Activated CD4-positive, alpha-beta T cell treated with anti-CD3 and anti-CD28 coated beads for 36 hours (primary cell): ENCODE measurements at regions of chr14 and their contacts with region 1.

Region 1: GRCh38 chr14:91060351-91061055 is at the start of gene RPS6KA5:
- DNase-seq: peak; percentile 100
- ATAC-seq: peak; percentile 87
- H3K4me3 Mint-ChIP-seq: no peak within 1 kb of the TSS
- H3K27ac Mint-ChIP-seq: peak within 1 kb of the TSS; percentile 71
- H3K4me1 Mint-ChIP-seq: peaks cover 58% of the 10 kb centered on the region
- H3K27me3 Mint-ChIP-seq: no peaks in the 10 kb centered on the region
- total RNA-seq, gene RPS6KA5: 11.9 to 13.8 TPM

Region 2: DNA sequence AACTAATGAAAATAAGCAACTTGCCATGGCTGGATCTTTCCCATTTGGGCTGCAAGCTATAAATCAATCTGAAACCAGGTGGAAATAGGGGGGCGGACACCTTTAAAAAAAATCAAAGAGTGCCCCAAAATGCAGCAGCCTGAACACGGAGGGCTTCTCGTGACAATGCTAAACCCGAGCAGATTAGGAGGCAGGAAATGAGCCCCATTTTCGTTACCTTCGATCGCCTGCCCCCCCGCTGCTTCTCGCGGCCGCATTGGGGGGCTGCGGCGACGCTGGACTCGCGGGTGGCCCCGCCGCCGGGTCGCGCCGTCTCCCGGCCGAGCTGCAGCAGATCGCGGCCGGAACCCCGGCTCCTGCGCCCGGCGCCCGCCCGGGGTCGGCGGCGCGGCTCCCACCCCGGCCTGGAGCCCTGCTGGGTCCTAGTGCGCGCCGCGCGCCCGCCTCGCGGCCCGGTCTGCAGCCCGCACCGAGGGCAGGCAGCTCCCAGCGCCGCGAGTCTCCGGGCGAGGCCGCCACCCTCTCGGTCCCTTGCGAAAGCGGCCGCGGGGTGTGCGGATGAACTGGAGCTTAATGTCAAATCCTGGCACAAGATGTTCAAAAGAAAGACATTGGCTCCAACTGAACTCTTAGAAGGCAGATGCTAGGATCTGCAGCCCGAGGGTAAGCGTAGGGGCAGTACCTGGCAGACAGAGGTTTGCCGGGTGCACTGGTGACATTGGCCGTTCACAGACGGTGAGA is 1441.5 kb before region 1 on chr14:
- CTCF ChIA-PET with region 1: no interaction called
- POLR2A ChIA-PET with region 1: no interaction called
- intact Hi-C with region 1: loop called in 1 of 2 experiments (anchors 10 kb)
- DNase-seq: peak; percentile 82
- ATAC-seq: peak; percentile 38
- H3K4me3 Mint-ChIP-seq: peak overlapping the region; percentile 95
- H3K27ac Mint-ChIP-seq: peak overlapping the region; percentile 94
- H3K4me1 Mint-ChIP-seq: peaks cover 70% of the 10 kb centered on the region
- H3K27me3 Mint-ChIP-seq: no peaks in the 10 kb centered on the region

Region 3: GRCh38 chr14:90399541-90400444 is 660.7 kb before region 1 on chr14:
- CTCF ChIA-PET with region 1: no interaction called
- POLR2A ChIA-PET with region 1: no interaction called
- intact Hi-C with region 1: loop called in 1 of 2 experiments (anchors 5 kb)
- DNase-seq: peak; percentile 93
- ATAC-seq: peak; percentile 62
- H3K4me3 Mint-ChIP-seq: peak overlapping the region; percentile 97
- H3K27ac Mint-ChIP-seq: peak overlapping the region; percentile 95
- H3K4me1 Mint-ChIP-seq: peaks cover 53% of the 10 kb centered on the region
- H3K27me3 Mint-ChIP-seq: no peaks in the 10 kb centered on the region

Region 4: DNA sequence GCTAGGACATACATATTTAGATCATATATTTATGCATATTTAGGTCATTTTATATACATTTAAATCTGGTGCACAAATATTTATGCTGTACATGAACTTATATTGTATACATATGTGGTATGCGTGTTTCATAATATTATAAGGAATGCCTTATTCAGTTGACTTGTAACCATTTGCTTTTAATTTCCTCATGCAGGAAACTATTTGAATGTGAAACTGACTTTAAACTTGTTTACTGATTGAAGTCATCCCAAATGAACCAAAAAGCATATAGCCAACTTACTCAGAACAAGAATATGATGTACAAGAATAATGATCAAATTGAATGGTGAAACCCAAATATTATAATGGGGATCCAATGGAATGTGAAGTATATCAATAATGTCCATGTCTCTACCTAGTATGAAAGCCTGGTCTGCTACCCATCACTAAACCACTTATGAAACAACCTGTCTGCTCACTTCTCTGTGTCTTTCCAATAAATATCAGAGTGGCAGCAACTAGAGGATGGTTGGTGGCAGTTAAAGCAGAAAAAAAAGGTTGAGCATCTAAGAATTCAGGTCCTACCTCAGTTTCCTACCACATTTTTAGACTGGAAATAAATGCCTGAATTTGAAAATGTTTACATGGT is 38.4 kb before region 1 on chr14:
- CTCF ChIA-PET with region 1: interaction called, 3 read pairs
- POLR2A ChIA-PET with region 1: interaction called, 4 read pairs
- intact Hi-C with region 1: loop called (anchors 2 to 5 kb)
- DNase-seq: no peak
- ATAC-seq: peak; percentile 52
- H3K4me3 Mint-ChIP-seq: peak overlapping the region; percentile 53
- H3K27ac Mint-ChIP-seq: peak overlapping the region; percentile 81
- H3K4me1 Mint-ChIP-seq: peaks cover 36% of the 10 kb centered on the region
- H3K27me3 Mint-ChIP-seq: no peaks in the 10 kb centered on the region

Region 5: GRCh38 chr14:91138511-91139359 is 78.2 kb after region 1 on chr14:
- CTCF ChIA-PET with region 1: no interaction called
- POLR2A ChIA-PET with region 1: no interaction called
- intact Hi-C with region 1: loop called in 1 of 2 experiments (anchors 1 kb)
- DNase-seq: peak; percentile 72
- ATAC-seq: peak; percentile 84
- H3K4me3 Mint-ChIP-seq: no peak overlapping the region
- H3K27ac Mint-ChIP-seq: peak overlapping the region; percentile 29
- H3K4me1 Mint-ChIP-seq: peaks cover 41% of the 10 kb centered on the region
- H3K27me3 Mint-ChIP-seq: no peaks in the 10 kb centered on the region

Region 6: GRCh38 chr14:91303091-91303923 is 242.8 kb after region 1 on chr14:
- CTCF ChIA-PET with region 1: no interaction called
- POLR2A ChIA-PET with region 1: no interaction called
- intact Hi-C with region 1: loop called (anchors 5 kb)
- DNase-seq: peak; percentile 97
- ATAC-seq: peak; percentile 87
- H3K4me3 Mint-ChIP-seq: peak overlapping the region; percentile 66
- H3K27ac Mint-ChIP-seq: peak overlapping the region; percentile 97
- H3K4me1 Mint-ChIP-seq: peaks cover 63% of the 10 kb centered on the region
- H3K27me3 Mint-ChIP-seq: no peaks in the 10 kb centered on the region

Region 7: DNA sequence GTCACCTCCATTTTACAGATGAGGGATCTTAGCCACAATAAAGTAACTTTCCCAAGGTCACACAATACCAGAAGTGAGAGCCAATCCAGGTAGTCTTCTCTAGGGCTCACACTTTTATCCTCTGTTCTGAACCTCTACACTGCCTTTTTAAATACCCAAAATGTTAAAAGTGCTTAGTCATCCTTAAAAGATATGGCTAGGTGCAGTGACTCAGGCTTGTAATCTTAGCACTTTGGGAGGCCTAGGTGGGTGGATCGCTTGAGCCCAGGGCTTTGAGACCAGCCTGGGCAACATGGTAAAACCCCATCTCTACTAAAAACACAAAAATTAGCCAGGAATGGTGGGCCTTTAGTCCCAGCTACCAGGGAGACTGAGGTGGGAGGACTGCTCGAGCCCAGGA is 553.7 kb after region 1 on chr14:
- CTCF ChIA-PET with region 1: no interaction called
- POLR2A ChIA-PET with region 1: no interaction called
- intact Hi-C with region 1: no loop called
- DNase-seq: no peak
- ATAC-seq: peak; percentile 49
- H3K4me3 Mint-ChIP-seq: no peak overlapping the region
- H3K27ac Mint-ChIP-seq: no peak overlapping the region
- H3K4me1 Mint-ChIP-seq: peaks cover 6% of the 10 kb centered on the region
- H3K27me3 Mint-ChIP-seq: no peaks in the 10 kb centered on the region

Region 8: GRCh38 chr14:91866061-91866460 is 805.6 kb after region 1 on chr14:
- CTCF ChIA-PET with region 1: no interaction called
- POLR2A ChIA-PET with region 1: no interaction called
- intact Hi-C with region 1: loop called in 1 of 2 experiments (anchors 10 kb)
- DNase-seq: peak; percentile 66
- ATAC-seq: peak; percentile 20
- H3K4me3 Mint-ChIP-seq: peak overlapping the region; percentile 84
- H3K27ac Mint-ChIP-seq: peak overlapping the region; percentile 97
- H3K4me1 Mint-ChIP-seq: peaks cover 91% of the 10 kb centered on the region
- H3K27me3 Mint-ChIP-seq: no peaks in the 10 kb centered on the region